ENCODE measurements at regions of chr14 and their contacts with region 1.

Region 1: GRCh38 chr14:105473677-105474482 is 741 bp upstream of the CRIP2 start:
- DNase-seq: peak; percentile 79
- H3K4me3 Mint-ChIP-seq: peak overlapping the region; percentile 23
- H3K27ac Mint-ChIP-seq: no peak overlapping the region
- H3K4me1 Mint-ChIP-seq: peaks cover 8% of the 10 kb centered on the region
- H3K27me3 Mint-ChIP-seq: peaks cover 5% of the 10 kb centered on the region

Region 2: GRCh38 chr14:105527661-105528581 is 54.0 kb after region 1 on chr14:
- CTCF ChIA-PET with region 1: interaction called, 3 read pairs
- POLR2A ChIA-PET with region 1: no interaction called
- intact Hi-C with region 1: loop called (anchors 10 kb)
- DNase-seq: peak; percentile 86
- H3K4me3 Mint-ChIP-seq: peak overlapping the region; percentile 75
- H3K27ac Mint-ChIP-seq: peak overlapping the region; percentile 42
- H3K4me1 Mint-ChIP-seq: peaks cover 20% of the 10 kb centered on the region
- H3K27me3 Mint-ChIP-seq: peaks cover 2% of the 10 kb centered on the region

Region 3: GRCh38 chr14:105841022-105842009 is 367.4 kb after region 1 on chr14:
- CTCF ChIA-PET with region 1: no interaction called
- POLR2A ChIA-PET with region 1: no interaction called
- intact Hi-C with region 1: no loop called
- DNase-seq: no peak
- H3K4me3 Mint-ChIP-seq: no peak overlapping the region
- H3K27ac Mint-ChIP-seq: no peak overlapping the region
- H3K4me1 Mint-ChIP-seq: no peaks in the 10 kb centered on the region
- H3K27me3 Mint-ChIP-seq: no peaks in the 10 kb centered on the region